Ovary (tissue), 10 donors: ENCODE measurements at regions of chr15 and their contacts with region 1.

Region 1: GRCh38 chr15:63915873-63916771 is 82.4 kb upstream of the HERC1 start:
- DNase-seq: no peak
- H3K4me3 ChIP-seq: no peak overlapping the region
- H3K27ac ChIP-seq: no peak overlapping the region
- H3K4me1 ChIP-seq: peaks cover 11% of the 10 kb centered on the region
- H3K27me3 ChIP-seq: no peaks in the 10 kb centered on the region
- CTCF ChIP-seq: peak in 1 of 3 donors; percentile 17
- EP300 ChIP-seq: no peak
- POLR2A ChIP-seq: no peak

Region 2: GRCh38 chr15:63449731-63450130 is 466.4 kb before region 1 on chr15:
- intact Hi-C with region 1: no loop called
- DNase-seq: no peak
- H3K4me3 ChIP-seq: no peak overlapping the region
- H3K27ac ChIP-seq: no peak overlapping the region
- H3K4me1 ChIP-seq: peaks cover 3% of the 10 kb centered on the region
- H3K27me3 ChIP-seq: no peaks in the 10 kb centered on the region
- CTCF ChIP-seq: no peak
- EP300 ChIP-seq: no peak
- POLR2A ChIP-seq: no peak

Region 3: GRCh38 chr15:64046347-64047153 is 130.4 kb after region 1 on chr15 and contains the start of gene DAPK2:
- intact Hi-C with region 1: loop called in 1 of 4 experiments (anchors 10 kb)
- DNase-seq: peak; percentile 45 to 77 (median 71)
- H3K4me3 ChIP-seq: peak within 1 kb of the TSS; percentile 56
- H3K27ac ChIP-seq: no peak within 1 kb of the TSS
- H3K4me1 ChIP-seq: peaks cover 13% of the 10 kb centered on the region
- H3K27me3 ChIP-seq: no peaks in the 10 kb centered on the region
- CTCF ChIP-seq: peak; percentile 33 to 68 (median 58)
- EP300 ChIP-seq: no peak
- POLR2A ChIP-seq: no peak
- total RNA-seq, gene DAPK2: 0.77 to 6.2 (median 1.7) TPM